PC-3 (cell line): ENCODE measurements at regions of chr17 and their contacts with region 1.

Region 1: GRCh38 chr17:60652454-60653247 is 25.0 kb upstream of the BCAS3 start:
- DNase-seq: no peak
- ATAC-seq: no peak
- H3K4me3 ChIP-seq: no peak overlapping the region
- H3K27ac ChIP-seq: no peak overlapping the region
- H3K4me1 ChIP-seq: no peaks in the 10 kb centered on the region
- H3K27me3 ChIP-seq: no peaks in the 10 kb centered on the region
- CTCF ChIP-seq: no peak

Region 2: DNA sequence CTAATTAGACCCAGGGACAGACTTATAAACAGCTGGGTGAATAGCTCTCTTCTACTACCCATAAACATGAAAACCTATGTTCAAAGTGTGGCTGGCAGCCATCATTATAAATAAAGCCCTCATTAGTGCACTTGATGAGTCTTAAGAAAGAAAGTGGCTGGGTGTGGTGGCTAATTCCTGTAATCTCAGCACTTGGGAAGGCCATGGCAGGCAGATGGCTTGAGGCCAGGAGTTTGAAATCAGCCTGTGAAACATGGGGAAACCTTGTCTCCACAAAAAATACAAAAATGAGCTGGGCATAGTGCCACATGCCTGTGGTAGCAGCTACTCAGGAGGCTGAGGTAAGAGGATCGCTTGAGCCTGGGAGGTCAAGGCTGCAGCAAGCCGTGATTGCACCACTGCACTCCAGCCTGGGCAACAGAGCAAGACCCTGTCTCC is 98.3 kb before region 1 on chr17:
- CTCF ChIA-PET with region 1: no interaction called
- POLR2A ChIA-PET with region 1: no interaction called
- intact Hi-C with region 1: no loop called
- DNase-seq: peak; percentile 44
- ATAC-seq: no peak
- H3K4me3 ChIP-seq: no peak overlapping the region
- H3K27ac ChIP-seq: no peak overlapping the region
- H3K4me1 ChIP-seq: no peaks in the 10 kb centered on the region
- H3K27me3 ChIP-seq: no peaks in the 10 kb centered on the region
- CTCF ChIP-seq: no peak

Region 3: GRCh38 chr17:60582636-60583407 is 69.8 kb before region 1 on chr17:
- CTCF ChIA-PET with region 1: no interaction called
- POLR2A ChIA-PET with region 1: interaction called, 14 read pairs
- intact Hi-C with region 1: no loop called
- DNase-seq: no peak
- ATAC-seq: no peak
- H3K4me3 ChIP-seq: no peak overlapping the region
- H3K27ac ChIP-seq: no peak overlapping the region
- H3K4me1 ChIP-seq: no peaks in the 10 kb centered on the region
- H3K27me3 ChIP-seq: no peaks in the 10 kb centered on the region
- CTCF ChIP-seq: no peak

Region 4: DNA sequence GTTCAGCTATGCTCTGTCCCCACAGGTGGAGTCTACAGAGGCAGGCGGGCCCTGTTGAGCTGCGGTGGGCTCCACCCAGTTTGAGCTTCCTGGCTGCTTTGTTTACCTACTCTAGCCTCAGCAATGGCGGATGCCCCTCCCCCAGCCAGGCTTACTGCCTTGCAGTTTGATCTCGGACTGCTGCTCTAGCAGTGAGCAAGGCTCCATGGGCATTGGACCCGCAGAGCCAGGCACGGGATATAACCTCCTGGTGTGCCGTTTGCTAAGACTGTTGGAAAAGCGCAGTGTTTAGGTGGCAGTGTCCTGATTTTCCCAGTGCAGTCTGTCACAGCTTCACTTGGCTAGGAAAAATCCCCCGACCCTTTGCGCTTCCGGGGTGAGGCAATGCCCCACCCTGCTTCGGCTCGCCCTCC is 114.1 kb after region 1 on chr17:
- CTCF ChIA-PET with region 1: no interaction called
- POLR2A ChIA-PET with region 1: no interaction called
- intact Hi-C with region 1: no loop called
- DNase-seq: no peak
- ATAC-seq: no peak
- H3K4me3 ChIP-seq: no peak overlapping the region
- H3K27ac ChIP-seq: no peak overlapping the region
- H3K4me1 ChIP-seq: no peaks in the 10 kb centered on the region
- H3K27me3 ChIP-seq: no peaks in the 10 kb centered on the region
- CTCF ChIP-seq: no peak